AG04450 (cell line): ENCODE measurements at regions of chr13 and their contacts with region 1.

Region 1: GRCh38 chr13:62906469-62906868 is 1490.8 kb upstream of the PCDH20 start:
- DNase-seq: no peak
- H3K4me3 ChIP-seq: no peak overlapping the region
- H3K27ac ChIP-seq: no peak overlapping the region
- H3K27me3 ChIP-seq: no peaks in the 10 kb centered on the region
- CTCF ChIP-seq: no peak

Region 2: DNA sequence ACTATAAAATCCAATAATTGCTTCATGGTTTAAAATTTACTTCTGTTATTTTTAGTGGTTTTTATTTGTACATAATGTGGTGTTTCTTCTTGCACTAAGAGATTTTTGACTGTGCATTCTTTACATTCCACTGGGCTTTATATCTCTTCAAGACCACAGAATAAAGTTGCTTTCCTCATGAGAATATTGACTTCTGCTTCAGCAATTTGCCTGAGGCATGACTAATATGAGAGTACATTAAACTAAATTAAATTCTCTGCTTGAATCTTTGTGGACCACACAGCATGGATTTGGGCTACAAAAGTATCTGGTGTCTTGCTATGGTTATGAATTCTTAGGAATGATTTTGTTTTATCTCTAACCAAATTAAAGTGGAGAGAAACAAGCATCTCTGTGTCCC is 27.4 kb before region 1 on chr13:
- CTCF ChIA-PET with region 1: no interaction called
- POLR2A ChIA-PET with region 1: interaction called, 11 read pairs
- DNase-seq: peak; percentile 24
- H3K4me3 ChIP-seq: no peak overlapping the region
- H3K27ac ChIP-seq: no peak overlapping the region
- H3K27me3 ChIP-seq: no peaks in the 10 kb centered on the region
- CTCF ChIP-seq: no peak

Region 3: GRCh38 chr13:63161219-63161618 is 254.8 kb after region 1 on chr13:
- CTCF ChIA-PET with region 1: no interaction called
- POLR2A ChIA-PET with region 1: no interaction called
- DNase-seq: no peak
- H3K4me3 ChIP-seq: no peak overlapping the region
- H3K27ac ChIP-seq: no peak overlapping the region
- H3K27me3 ChIP-seq: no peaks in the 10 kb centered on the region
- CTCF ChIP-seq: no peak